K562 (cell line): ENCODE measurements at regions of chr12 and their contacts with region 1.

Region 1: GRCh38 chr12:53625946-53626701 is at the start of gene ATF7:
- DNase-seq: peak; percentile 97 to 99 (median 98)
- ATAC-seq: peak; percentile 95
- H3K4me3 ChIP-seq: peak within 1 kb of the TSS; percentile 60
- H3K27ac ChIP-seq: peak within 1 kb of the TSS; percentile 98
- H3K4me1 ChIP-seq: peaks cover 8 to 10% of the 10 kb centered on the region in 2 experiments; a peak in 3 of 5 replicates
- H3K27me3 ChIP-seq: no peaks in the 10 kb centered on the region
- CTCF ChIP-seq: no peak
- EP300 ChIP-seq: no peak; the same call in 1 of the 2 replicates
- POLR2A ChIP-seq: peak; percentile 89
- RAD21 ChIP-seq: no peak
- polyA plus RNA-seq, gene ATF7: 28.9 to 30.4 TPM

Region 2: GRCh38 chr12:53352331-53353256 is 273.5 kb before region 1 on chr12:
- CTCF ChIA-PET with region 1: no interaction called
- POLR2A ChIA-PET with region 1: no interaction called
- in situ Hi-C with region 1: no loop called
- intact Hi-C with region 1: no loop called
- DNase-seq: peak; percentile 71 to 93 (median 74)
- ATAC-seq: peak; percentile 95
- H3K4me3 ChIP-seq: no peak overlapping the region
- H3K27ac ChIP-seq: no peak overlapping the region
- H3K4me1 ChIP-seq: peaks cover 12 to 17% of the 10 kb centered on the region in 2 experiments
- H3K27me3 ChIP-seq: no peaks in the 10 kb centered on the region
- CTCF ChIP-seq: peak; percentile 91 to 96 (median 92)
- EP300 ChIP-seq: no peak
- POLR2A ChIP-seq: no peak
- RAD21 ChIP-seq: peak; percentile 98 to 99

Region 3: DNA sequence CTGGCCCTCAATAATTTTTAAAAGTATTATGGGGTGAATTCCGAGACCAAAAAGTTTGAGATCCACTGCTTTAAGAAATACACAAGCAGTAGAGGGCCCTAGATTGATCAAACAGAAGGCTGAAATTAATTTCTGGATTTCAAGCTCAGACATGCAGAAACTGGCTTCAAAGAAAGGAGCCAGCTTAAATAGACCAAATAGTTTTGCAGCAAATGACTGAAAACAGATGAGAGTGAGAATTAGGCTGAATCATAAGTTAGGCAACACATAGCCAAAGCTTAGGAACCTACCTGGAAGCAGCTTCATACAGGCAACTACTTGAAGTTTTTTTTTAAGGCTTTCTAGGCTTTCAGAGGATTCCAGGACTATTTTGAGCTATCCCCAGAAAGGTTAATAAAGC is 12.3 kb before region 1 on chr12:
- CTCF ChIA-PET with region 1: no interaction called
- POLR2A ChIA-PET with region 1: interaction called, 46 read pairs
- in situ Hi-C with region 1: no loop called
- intact Hi-C with region 1: no loop called
- DNase-seq: no peak
- ATAC-seq: no peak
- H3K4me3 ChIP-seq: no peak overlapping the region
- H3K27ac ChIP-seq: peak overlapping the region; percentile 10; the same call in 1 of the 3 replicates
- H3K4me1 ChIP-seq: peaks cover 7 to 9% of the 10 kb centered on the region in 2 experiments; a peak in 4 of 5 replicates
- H3K27me3 ChIP-seq: no peaks in the 10 kb centered on the region
- CTCF ChIP-seq: no peak
- EP300 ChIP-seq: no peak
- POLR2A ChIP-seq: no peak
- RAD21 ChIP-seq: no peak